CD4-positive, alpha-beta memory T cell (primary cell): ENCODE measurements at regions of chr12 and their contacts with region 1.

Region 1: DNA sequence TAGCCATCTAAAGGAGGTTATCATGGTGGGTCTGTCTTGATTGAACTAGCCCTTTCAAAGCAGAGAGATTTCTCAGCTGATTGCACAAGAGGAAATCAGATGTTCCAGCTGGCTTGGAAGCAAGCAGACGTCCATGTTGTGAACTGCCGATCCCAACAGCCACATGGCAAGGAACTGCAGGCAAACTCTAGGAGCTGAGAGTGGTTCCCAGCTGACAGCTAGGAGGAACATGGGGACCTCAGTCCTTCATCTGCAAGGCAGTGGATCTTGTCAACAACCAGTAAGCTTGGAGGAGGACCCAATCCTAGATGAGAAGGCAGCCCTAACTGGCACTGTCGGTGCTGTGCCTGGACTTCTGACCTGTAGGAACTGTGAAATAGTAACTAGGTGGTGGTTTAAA is 7.7 kb downstream of the ACVR1B start:
- DNase-seq: no peak
- H3K4me3 ChIP-seq: no peak overlapping the region
- H3K4me3 Mint-ChIP-seq: peak overlapping the region in 1 of 8 donors; percentile 60
- H3K27ac ChIP-seq: no peak overlapping the region
- H3K27ac Mint-ChIP-seq: peak overlapping the region in 4 of 7 donors; percentile 6 to 81 (median 41)
- H3K4me1 ChIP-seq: peaks cover 19% of the 10 kb centered on the region
- H3K4me1 Mint-ChIP-seq: peaks cover 41 to 55% (median 49%) of the 10 kb centered on the region in 4 donors
- H3K27me3 ChIP-seq: no peaks in the 10 kb centered on the region
- H3K27me3 Mint-ChIP-seq: no peaks in the 10 kb centered on the region

Region 2: DNA sequence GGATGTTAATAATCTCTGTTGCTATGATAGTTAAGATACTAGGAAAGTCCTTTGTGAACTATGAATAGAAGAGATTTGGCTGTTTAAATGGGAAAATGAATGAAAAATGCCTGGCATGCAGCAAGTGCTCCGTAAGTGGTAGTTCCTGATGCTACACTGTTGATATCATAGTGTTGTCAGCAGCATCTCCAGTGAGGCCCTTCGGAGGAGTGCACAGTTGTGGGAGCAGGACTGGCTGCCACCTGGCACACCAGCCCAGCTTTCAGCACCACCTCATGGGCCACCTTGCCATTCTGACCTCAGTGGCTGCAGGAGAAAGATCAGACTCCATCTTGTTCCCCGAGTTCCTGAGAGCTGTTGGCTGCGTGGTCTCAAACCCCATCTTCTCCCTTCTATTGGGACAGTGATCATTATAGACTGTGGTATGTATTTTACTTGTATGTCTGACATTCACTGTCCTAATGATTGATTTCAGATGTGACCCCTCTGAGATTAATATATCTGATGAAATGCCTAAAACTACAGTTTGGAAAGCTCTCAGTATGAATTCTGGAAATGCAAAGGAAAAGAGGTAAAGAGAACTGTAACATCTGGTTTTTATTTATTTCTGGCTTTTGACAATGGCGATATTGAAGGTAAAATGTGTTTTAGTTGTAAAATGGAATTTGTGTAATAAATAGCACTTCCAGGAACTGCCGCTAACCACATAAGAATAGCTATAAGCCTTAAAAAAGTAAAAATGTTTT is 453.7 kb before region 1 on chr12:
- CTCF ChIA-PET with region 1: no interaction called
- POLR2A ChIA-PET with region 1: no interaction called
- intact Hi-C with region 1: no loop called
- DNase-seq: no peak
- H3K4me3 ChIP-seq: no peak overlapping the region
- H3K4me3 Mint-ChIP-seq: no peak overlapping the region
- H3K27ac ChIP-seq: no peak overlapping the region
- H3K27ac Mint-ChIP-seq: no peak overlapping the region
- H3K4me1 ChIP-seq: no peaks in the 10 kb centered on the region
- H3K4me1 Mint-ChIP-seq: peaks cover 0 to 1% (median 0%) of the 10 kb centered on the region in 4 donors
- H3K27me3 ChIP-seq: no peaks in the 10 kb centered on the region
- H3K27me3 Mint-ChIP-seq: no peaks in the 10 kb centered on the region

Region 3: DNA sequence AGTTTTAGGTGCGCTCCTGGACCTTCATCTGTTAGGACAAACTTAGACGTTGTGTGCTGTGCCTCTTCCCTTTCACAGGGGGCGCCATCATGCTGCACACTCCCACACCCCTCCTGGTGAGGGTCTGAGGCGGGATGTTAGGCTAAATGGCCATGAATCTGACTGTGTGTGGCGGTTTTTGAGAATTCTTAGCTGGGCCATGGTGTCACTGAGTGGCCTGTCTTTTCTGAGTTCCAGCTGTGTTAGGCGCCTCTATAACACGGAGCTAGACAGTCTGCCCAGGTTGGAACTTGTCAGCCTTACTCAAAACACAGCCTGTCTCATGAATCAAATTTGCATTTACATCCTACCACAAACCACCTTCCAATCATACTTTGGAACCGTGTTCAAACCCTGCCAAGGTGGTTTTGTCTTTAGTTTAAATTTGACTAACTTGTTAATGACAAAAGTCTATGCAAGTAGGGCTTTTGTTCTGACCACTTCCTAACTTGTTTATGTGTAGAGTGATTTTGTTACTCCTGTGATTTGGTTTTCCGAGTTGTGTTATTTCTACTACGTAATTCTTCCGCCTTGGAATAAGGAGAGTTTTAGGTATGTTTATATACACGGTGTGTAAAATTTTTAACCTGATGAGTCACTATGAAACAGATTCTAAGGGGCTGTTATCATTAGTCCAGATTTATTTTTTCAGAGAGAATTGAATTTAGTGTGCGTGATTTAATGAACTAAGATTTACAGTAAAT is 11.9 kb after region 1 on chr12:
- CTCF ChIA-PET with region 1: interaction called, 61 read pairs
- POLR2A ChIA-PET with region 1: interaction called, 3 read pairs
- intact Hi-C with region 1: no loop called
- DNase-seq: peak; percentile 50 to 72 (median 53)
- H3K4me3 ChIP-seq: no peak overlapping the region
- H3K4me3 Mint-ChIP-seq: peak overlapping the region; percentile 31 to 86 (median 66)
- H3K27ac ChIP-seq: peak overlapping the region; percentile 12
- H3K27ac Mint-ChIP-seq: peak overlapping the region; percentile 66 to 91 (median 84)
- H3K4me1 ChIP-seq: peaks cover 62% of the 10 kb centered on the region
- H3K4me1 Mint-ChIP-seq: peaks cover 56 to 72% (median 62%) of the 10 kb centered on the region in 4 donors
- H3K27me3 ChIP-seq: no peaks in the 10 kb centered on the region
- H3K27me3 Mint-ChIP-seq: no peaks in the 10 kb centered on the region